ENCODE measurements at regions of chr2 and their contacts with region 1.

Region 1: GRCh38 chr2:182666674-182667314 is 49.3 kb upstream of the DNAJC10 start:
- DNase-seq: peak; percentile 50
- H3K4me3 ChIP-seq: no peak overlapping the region
- H3K27ac ChIP-seq: no peak overlapping the region
- H3K4me1 ChIP-seq: no peaks in the 10 kb centered on the region
- H3K27me3 ChIP-seq: no peaks in the 10 kb centered on the region

Region 2: DNA sequence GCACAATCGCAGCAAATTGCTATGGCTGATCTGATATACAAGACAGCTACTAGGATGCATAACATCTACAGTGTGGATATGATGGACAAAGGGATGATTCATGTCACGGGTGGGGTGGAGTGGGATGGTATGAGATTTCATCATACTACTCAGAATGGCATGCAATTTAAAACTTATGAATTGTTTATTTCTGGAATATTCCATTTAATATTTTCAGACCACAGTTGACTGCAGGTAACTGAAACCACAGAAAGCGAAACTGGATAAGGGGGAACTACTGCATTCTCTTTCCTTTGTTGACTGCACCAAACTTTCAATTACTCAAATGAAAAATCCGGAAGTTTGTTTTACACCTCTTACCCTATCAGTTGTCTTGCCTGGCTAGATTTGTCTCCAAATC is 892.1 kb before region 1 on chr2:
- in situ Hi-C with region 1: loop called (anchors 25 kb)
- DNase-seq: peak; percentile 55
- H3K4me3 ChIP-seq: no peak overlapping the region
- H3K27ac ChIP-seq: no peak overlapping the region
- H3K4me1 ChIP-seq: peaks cover 15% of the 10 kb centered on the region
- H3K27me3 ChIP-seq: no peaks in the 10 kb centered on the region

Region 3: DNA sequence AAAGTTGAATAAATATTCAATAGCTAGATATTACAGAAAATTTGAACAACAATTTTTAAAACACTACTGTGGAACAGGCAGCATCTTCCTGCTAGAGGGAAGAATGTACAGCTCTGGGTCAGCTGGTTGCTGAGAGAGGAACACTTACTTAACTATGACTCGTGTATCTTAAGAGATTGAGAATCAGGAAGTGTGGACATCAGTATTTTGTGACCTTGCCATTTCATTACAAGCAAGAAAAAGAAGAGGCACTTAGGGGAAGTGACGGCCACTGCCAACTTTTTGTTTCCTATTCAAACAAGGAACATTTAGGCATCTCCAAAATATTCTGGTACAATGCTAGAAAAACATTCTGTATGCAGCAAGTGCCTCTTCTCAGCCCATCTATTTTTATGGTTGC is 729.3 kb before region 1 on chr2:
- in situ Hi-C with region 1: loop called (anchors 25 kb)
- DNase-seq: peak; percentile 37
- H3K4me3 ChIP-seq: no peak overlapping the region
- H3K27ac ChIP-seq: no peak overlapping the region
- H3K4me1 ChIP-seq: no peaks in the 10 kb centered on the region
- H3K27me3 ChIP-seq: no peaks in the 10 kb centered on the region

Region 4: GRCh38 chr2:182792441-182792840 is 125.6 kb after region 1 on chr2:
- in situ Hi-C with region 1: no loop called
- DNase-seq: no peak
- H3K4me3 ChIP-seq: no peak overlapping the region
- H3K27ac ChIP-seq: no peak overlapping the region
- H3K4me1 ChIP-seq: no peaks in the 10 kb centered on the region
- H3K27me3 ChIP-seq: no peaks in the 10 kb centered on the region

Region 5: GRCh38 chr2:182954789-182955188 is 288.0 kb after region 1 on chr2:
- in situ Hi-C with region 1: no loop called
- DNase-seq: no peak
- H3K4me3 ChIP-seq: no peak overlapping the region
- H3K27ac ChIP-seq: no peak overlapping the region
- H3K4me1 ChIP-seq: no peaks in the 10 kb centered on the region
- H3K27me3 ChIP-seq: no peaks in the 10 kb centered on the region